ENCODE measurements at regions of chr17 and their contacts with region 1.

Region 1: DNA sequence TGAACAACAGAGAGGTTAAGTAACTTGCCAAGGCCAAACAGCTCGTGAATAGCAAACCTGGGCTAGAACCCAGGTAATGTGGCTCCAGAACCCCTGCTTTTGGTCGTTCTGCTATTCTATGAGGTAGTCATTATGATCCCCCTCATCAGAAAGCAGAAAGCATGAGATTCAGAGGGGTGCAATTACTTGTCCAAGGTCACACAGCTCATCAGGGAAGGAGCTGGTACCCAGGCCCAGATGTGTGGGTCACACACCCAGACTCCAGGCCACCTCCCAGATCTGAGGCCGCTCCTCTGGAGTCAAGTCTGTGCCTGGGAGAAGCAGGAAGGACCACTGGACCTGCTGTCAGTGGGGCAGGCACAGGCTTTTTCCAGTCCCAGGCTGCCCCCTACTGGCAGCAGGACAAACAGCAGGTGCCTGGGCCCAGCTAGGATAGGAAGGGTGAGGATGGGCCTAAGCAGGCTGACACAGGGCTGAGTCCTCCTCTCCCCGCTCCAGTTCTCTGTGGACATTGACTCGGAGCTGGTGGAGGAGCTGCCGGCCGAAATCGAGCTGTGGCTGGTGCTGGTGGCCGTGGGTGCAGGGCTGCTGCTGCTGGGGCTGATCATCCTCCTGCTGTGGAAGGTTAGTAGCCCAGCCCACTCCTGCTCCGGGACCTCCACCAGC is 7.8 kb upstream of the PDK2 start:
- DNase-seq: peak; percentile 65 to 79 (median 65)
- H3K4me3 ChIP-seq: no peak overlapping the region
- H3K4me3 Mint-ChIP-seq: no peak overlapping the region
- H3K27ac ChIP-seq: no peak overlapping the region
- H3K27ac Mint-ChIP-seq: no peak overlapping the region
- H3K4me1 ChIP-seq: no peaks in the 10 kb centered on the region
- H3K4me1 Mint-ChIP-seq: no peaks in the 10 kb centered on the region
- H3K27me3 ChIP-seq: no peaks in the 10 kb centered on the region
- H3K27me3 Mint-ChIP-seq: no peaks in the 10 kb centered on the region

Region 2: GRCh38 chr17:50026901-50027630 is 60.3 kb before region 1 on chr17:
- CTCF ChIA-PET with region 1: interaction called, 88 read pairs
- POLR2A ChIA-PET with region 1: no interaction called
- DNase-seq: peak; percentile 61 to 81 (median 68)
- H3K4me3 ChIP-seq: no peak overlapping the region
- H3K4me3 Mint-ChIP-seq: peak overlapping the region in 3 of 7 donors; percentile 23 to 51 (median 44)
- H3K27ac ChIP-seq: no peak overlapping the region
- H3K27ac Mint-ChIP-seq: peak overlapping the region in 1 of 8 donors; percentile 50
- H3K4me1 ChIP-seq: peaks cover 8% of the 10 kb centered on the region
- H3K4me1 Mint-ChIP-seq: peaks cover 8 to 14% (median 10%) of the 10 kb centered on the region in 3 donors
- H3K27me3 ChIP-seq: peaks cover 10% of the 10 kb centered on the region
- H3K27me3 Mint-ChIP-seq: peaks cover 13 to 37% of the 10 kb centered on the region in 2 donors

Region 3: GRCh38 chr17:50033316-50033715 is 54.1 kb before region 1 on chr17:
- CTCF ChIA-PET with region 1: interaction called, 88 read pairs
- POLR2A ChIA-PET with region 1: no interaction called
- DNase-seq: no peak
- H3K4me3 ChIP-seq: no peak overlapping the region
- H3K4me3 Mint-ChIP-seq: no peak overlapping the region
- H3K27ac ChIP-seq: no peak overlapping the region
- H3K27ac Mint-ChIP-seq: no peak overlapping the region
- H3K4me1 ChIP-seq: no peaks in the 10 kb centered on the region
- H3K4me1 Mint-ChIP-seq: peaks cover 0 to 2% (median under 1%) of the 10 kb centered on the region in 3 donors
- H3K27me3 ChIP-seq: no peaks in the 10 kb centered on the region
- H3K27me3 Mint-ChIP-seq: peaks cover 6 to 38% of the 10 kb centered on the region in 2 donors

Region 4: GRCh38 chr17:50055426-50056230 is 31.8 kb before region 1 on chr17 and contains the start of gene ITGA3:
- CTCF ChIA-PET with region 1: interaction called, 27 read pairs
- POLR2A ChIA-PET with region 1: no interaction called
- DNase-seq: peak; percentile 40 to 73 (median 49)
- H3K4me3 ChIP-seq: peak within 1 kb of the TSS; percentile 72
- H3K4me3 Mint-ChIP-seq: peak within 1 kb of the TSS; percentile 87 to 97 (median 90)
- H3K27ac ChIP-seq: no peak within 1 kb of the TSS
- H3K27ac Mint-ChIP-seq: peak within 1 kb of the TSS; percentile 57 to 91 (median 84)
- H3K4me1 ChIP-seq: peaks cover 10% of the 10 kb centered on the region
- H3K4me1 Mint-ChIP-seq: peaks cover 21 to 38% (median 25%) of the 10 kb centered on the region in 3 donors
- H3K27me3 ChIP-seq: no peaks in the 10 kb centered on the region
- H3K27me3 Mint-ChIP-seq: no peaks in the 10 kb centered on the region
- total RNA-seq, gene ITGA3: 11.8 to 12.5 TPM

Region 5: DNA sequence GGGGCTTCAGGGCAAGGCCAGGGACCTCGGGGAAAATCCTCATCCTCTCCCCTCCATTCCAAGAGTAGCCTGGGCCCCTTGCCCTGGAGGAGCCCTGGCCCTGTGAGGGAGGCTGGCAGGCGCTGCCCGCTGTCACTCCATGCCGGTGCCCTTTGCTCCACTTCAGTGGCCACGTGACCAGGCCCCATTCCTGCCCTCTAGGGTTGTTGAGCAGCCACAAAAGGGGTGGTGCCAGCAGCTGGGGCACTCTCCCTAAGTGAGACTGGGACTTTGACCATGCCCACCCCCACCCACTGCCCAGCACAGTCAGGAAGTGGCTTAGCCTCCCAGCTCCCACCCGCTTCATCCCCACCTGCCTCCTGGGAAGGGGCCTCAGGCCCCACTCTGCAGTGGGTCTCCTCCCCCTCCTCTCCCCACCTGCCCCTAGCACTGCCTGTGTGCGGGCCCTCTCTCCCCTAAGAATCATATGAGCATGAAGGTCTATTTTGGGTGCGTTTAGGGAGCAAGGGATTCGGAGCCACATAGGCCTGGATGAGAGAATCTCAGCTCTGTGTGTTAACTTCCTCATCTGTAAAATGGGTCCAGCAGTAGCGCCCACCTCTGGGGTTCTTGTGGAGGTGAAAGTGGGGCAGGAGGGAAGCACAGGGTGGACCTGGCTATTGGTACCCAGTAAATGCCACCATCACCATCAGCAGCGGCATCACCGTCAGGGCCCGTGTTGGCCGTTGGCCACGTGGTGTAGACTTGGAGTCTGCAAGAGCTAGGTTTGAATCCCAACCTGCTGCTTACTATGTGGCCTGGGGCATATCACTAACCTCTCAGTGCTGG is 15.0 kb after region 1 on chr17:
- CTCF ChIA-PET with region 1: interaction called, 10 read pairs
- POLR2A ChIA-PET with region 1: no interaction called
- DNase-seq: no peak
- H3K4me3 ChIP-seq: no peak overlapping the region
- H3K4me3 Mint-ChIP-seq: no peak overlapping the region
- H3K27ac ChIP-seq: no peak overlapping the region
- H3K27ac Mint-ChIP-seq: no peak overlapping the region
- H3K4me1 ChIP-seq: no peaks in the 10 kb centered on the region
- H3K4me1 Mint-ChIP-seq: peaks cover 14 to 33% (median 21%) of the 10 kb centered on the region in 3 donors
- H3K27me3 ChIP-seq: no peaks in the 10 kb centered on the region
- H3K27me3 Mint-ChIP-seq: no peaks in the 10 kb centered on the region

Region 6: DNA sequence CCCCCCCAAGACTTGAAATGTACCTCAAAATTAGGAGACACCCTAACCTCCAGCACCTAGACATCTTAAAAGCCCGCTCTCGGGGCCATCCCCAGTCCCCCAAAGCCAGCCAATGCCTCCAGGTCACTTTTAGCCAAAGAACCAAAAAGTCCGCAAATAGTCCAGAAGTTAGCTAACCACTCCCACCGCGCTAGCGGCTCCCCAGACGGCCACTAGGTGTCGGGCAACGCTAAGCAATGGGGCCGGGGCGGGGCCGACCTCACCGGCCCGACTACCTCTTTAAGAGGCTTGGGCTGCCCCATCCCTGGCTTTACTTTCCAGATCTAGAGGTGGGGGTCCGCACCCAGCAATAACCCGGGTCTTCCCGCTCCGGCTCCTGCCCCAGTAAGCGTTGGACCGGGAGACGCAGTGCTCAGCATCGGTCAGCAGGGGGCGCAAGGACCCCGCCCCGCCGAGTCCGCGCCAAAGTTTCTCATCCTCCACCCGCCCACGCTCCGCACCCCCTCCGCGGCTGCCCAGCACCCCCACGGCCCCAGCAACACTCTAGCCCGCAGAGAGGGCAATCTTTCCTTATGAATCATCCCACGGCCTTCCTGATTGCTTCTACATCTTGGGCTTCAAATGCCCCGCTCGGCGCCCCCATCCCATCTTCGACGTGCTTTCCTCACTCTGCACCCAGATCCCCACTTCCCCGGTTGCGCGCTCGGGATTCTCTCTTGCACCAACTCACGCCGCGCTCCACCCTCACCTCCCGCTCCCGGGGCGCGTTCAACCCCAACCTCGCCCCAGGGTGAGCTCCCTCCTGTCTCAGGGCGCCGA is 113.3 kb after region 1 on chr17:
- CTCF ChIA-PET with region 1: no interaction called
- POLR2A ChIA-PET with region 1: no interaction called
- DNase-seq: peak; percentile 70 to 83 (median 75)
- H3K4me3 ChIP-seq: peak overlapping the region; percentile 59
- H3K4me3 Mint-ChIP-seq: peak overlapping the region; percentile 75 to 90 (median 80)
- H3K27ac ChIP-seq: no peak overlapping the region
- H3K27ac Mint-ChIP-seq: peak overlapping the region in 7 of 8 donors; percentile 14 to 97 (median 87)
- H3K4me1 ChIP-seq: peaks cover 17% of the 10 kb centered on the region
- H3K4me1 Mint-ChIP-seq: peaks cover 16 to 29% (median 16%) of the 10 kb centered on the region in 3 donors
- H3K27me3 ChIP-seq: peaks cover 25% of the 10 kb centered on the region
- H3K27me3 Mint-ChIP-seq: peaks cover 45 to 51% of the 10 kb centered on the region in 2 donors

Region 7: GRCh38 chr17:50256826-50257610 is 169.6 kb after region 1 on chr17:
- CTCF ChIA-PET with region 1: no interaction called
- POLR2A ChIA-PET with region 1: no interaction called
- DNase-seq: no peak
- H3K4me3 ChIP-seq: no peak overlapping the region
- H3K4me3 Mint-ChIP-seq: no peak overlapping the region
- H3K27ac ChIP-seq: no peak overlapping the region
- H3K27ac Mint-ChIP-seq: no peak overlapping the region
- H3K4me1 ChIP-seq: no peaks in the 10 kb centered on the region
- H3K4me1 Mint-ChIP-seq: no peaks in the 10 kb centered on the region
- H3K27me3 ChIP-seq: no peaks in the 10 kb centered on the region
- H3K27me3 Mint-ChIP-seq: peaks cover 1 to 17% of the 10 kb centered on the region in 2 donors

Measured in CD8-positive, alpha-beta memory T cell (primary cell).